OCI-LY7 (cell line): ENCODE measurements at regions of chr22 and their contacts with region 1.

Region 1: GRCh38 chr22:36017651-36018091 is 11.0 kb downstream of the RBFOX2 start:
- DNase-seq: peak; percentile 97
- H3K4me3 ChIP-seq: peak overlapping the region; percentile 56
- H3K27ac ChIP-seq: peak overlapping the region; percentile 98
- H3K4me1 ChIP-seq: peaks cover 83% of the 10 kb centered on the region
- CTCF ChIP-seq: no peak

Region 2: GRCh38 chr22:35930933-35931332 is 86.7 kb before region 1 on chr22:
- CTCF ChIA-PET with region 1: no interaction called
- POLR2A ChIA-PET with region 1: interaction called, 6 read pairs
- intact Hi-C with region 1: loop called (anchors 2 kb)
- DNase-seq: peak; percentile 80
- H3K4me3 ChIP-seq: no peak overlapping the region
- H3K27ac ChIP-seq: no peak overlapping the region
- H3K4me1 ChIP-seq: peaks cover 7% of the 10 kb centered on the region
- CTCF ChIP-seq: peak; percentile 93

Region 3: DNA sequence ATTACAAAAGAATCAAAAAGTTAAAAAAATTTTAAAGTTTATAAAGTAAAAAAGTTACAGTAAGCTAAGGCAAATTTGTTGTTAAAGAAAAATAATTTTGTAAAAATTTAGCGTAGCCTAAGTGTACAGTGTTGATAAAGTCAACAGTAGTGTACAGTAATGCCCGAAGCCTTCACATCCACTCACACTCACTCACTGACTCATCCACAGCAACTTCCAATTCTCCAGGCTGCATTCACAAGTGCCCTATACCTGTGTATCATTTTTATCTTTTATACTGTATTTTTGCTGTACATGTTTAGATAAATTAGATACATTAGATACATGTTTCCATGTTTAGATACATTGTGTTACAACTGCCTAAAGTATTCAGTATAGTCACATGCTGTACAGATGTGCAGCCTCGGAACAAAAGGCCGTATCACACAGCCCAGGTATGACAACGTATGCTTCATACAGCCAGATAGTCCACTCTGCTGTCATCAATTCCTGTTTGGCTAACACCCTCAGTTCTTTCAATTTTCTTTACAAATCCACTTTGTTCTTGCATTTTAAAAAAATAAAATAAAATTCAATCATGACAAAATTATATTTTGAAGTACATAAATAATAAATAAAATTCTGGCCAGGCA is 69.8 kb before region 1 on chr22:
- CTCF ChIA-PET with region 1: no interaction called
- POLR2A ChIA-PET with region 1: interaction called, 10 read pairs
- intact Hi-C with region 1: no loop called
- DNase-seq: no peak
- H3K4me3 ChIP-seq: no peak overlapping the region
- H3K27ac ChIP-seq: no peak overlapping the region
- H3K4me1 ChIP-seq: no peaks in the 10 kb centered on the region
- CTCF ChIP-seq: no peak

Region 4: GRCh38 chr22:36028646-36029405 is 11.2 kb after region 1 on chr22 and contains the start of gene RBFOX2:
- CTCF ChIA-PET with region 1: interaction called, 3 read pairs
- POLR2A ChIA-PET with region 1: interaction called, 14 read pairs
- intact Hi-C with region 1: no loop called
- DNase-seq: peak; percentile 77
- H3K4me3 ChIP-seq: peak within 1 kb of the TSS; percentile 96
- H3K27ac ChIP-seq: peak within 1 kb of the TSS; percentile 65
- H3K4me1 ChIP-seq: peaks cover 28% of the 10 kb centered on the region
- CTCF ChIP-seq: no peak
- total RNA-seq, gene RBFOX2: 74.3 and 78.7 TPM in 2 replicates

Region 5: GRCh38 chr22:36048911-36049677 is 31.4 kb after region 1 on chr22:
- CTCF ChIA-PET with region 1: no interaction called
- POLR2A ChIA-PET with region 1: no interaction called
- intact Hi-C with region 1: no loop called
- DNase-seq: no peak
- H3K4me3 ChIP-seq: no peak overlapping the region
- H3K27ac ChIP-seq: no peak overlapping the region
- H3K4me1 ChIP-seq: peaks cover 7% of the 10 kb centered on the region
- CTCF ChIP-seq: no peak

Region 6: DNA sequence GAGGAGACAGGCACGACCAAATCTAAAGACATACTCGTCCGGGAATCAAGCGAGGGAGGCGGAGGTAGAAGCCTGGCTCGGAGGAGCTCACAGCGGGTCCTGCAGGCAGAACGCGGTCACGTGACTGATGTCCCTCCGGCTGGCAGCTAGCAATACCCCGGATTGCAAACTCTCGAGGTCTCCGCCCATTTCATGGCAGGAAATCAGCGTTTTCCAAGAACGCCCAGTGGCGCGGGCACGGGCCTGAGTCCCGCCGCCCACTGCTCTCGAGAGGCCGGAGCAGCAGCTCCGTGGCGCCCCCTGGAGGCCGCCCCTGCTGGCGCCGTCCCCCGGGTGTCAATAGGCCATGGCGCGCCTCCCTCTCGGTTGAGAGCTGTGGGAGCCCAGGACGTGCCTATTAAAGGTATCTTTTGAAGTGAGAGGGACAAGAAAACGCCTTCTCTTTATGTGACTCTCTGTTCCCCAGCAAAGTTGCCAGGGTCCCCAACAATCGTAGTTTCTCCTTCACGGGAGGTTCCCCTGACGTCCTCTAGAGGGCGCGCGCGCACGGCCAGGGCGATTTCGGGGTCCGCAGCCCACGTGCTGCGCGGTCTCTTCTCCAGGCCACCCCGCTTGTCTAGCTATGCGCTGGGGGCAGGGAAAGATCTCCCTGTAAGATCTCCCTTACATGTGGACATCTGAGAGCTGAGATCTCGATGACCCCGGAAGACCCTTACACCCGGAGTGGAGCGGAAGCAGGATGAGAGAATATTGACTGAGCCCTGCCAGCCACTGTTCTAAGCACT is 48.3 kb after region 1 on chr22:
- CTCF ChIA-PET with region 1: interaction called, 11 read pairs
- POLR2A ChIA-PET with region 1: interaction called, 5 read pairs
- intact Hi-C with region 1: no loop called
- DNase-seq: peak; percentile 81
- H3K4me3 ChIP-seq: peak overlapping the region; percentile 65
- H3K27ac ChIP-seq: no peak overlapping the region
- H3K4me1 ChIP-seq: peaks cover 10% of the 10 kb centered on the region
- CTCF ChIP-seq: peak; percentile 100

Region 7: DNA sequence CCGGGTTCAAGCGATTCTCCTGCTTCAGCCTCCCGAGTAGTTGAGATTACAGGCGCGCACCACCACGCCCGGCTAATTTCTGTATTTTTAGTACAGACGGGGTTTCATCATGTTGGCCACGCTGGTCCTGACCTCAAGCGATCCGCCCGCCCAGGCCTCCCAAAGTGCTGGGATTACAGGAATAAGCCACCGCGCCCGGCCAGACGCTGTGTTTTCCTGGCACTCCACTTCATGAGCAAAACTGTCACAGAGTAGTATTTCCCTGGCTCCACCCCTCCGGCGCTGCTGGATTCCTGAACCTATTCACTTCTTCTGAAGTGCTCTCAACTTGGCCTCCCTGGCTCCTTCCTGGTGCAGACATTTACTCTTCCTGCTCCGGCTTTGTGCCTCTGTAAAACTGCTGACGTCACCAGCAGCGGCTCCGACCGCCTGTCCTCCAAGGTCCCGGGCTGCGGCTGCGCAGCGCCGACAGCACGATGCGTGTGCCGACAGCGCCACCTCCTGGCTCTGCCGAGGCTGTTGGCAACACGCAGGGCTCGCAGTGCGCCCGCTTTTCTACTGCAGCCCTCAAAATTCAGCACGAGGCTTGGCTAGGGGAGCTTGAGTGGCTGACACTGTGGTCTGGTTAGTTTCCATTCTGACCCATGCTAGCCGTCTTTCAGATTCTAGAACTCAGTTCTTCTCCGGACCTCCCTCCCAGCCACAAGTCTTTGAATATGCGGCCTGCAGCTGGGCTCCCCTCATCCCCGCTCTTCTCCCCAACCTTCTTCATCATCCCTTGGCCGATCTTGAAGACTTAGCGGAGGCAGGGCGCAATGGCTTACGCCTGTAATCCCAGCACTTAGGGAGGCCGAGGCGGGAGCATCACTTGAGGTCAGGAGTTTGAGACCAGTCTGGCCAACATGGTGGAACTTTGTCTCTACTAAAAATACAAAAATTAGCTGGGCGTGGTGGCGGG is 106.3 kb after region 1 on chr22:
- CTCF ChIA-PET with region 1: no interaction called
- POLR2A ChIA-PET with region 1: no interaction called
- intact Hi-C with region 1: loop called (anchors 5 kb)
- DNase-seq: peak; percentile 95
- H3K4me3 ChIP-seq: no peak overlapping the region
- H3K27ac ChIP-seq: no peak overlapping the region
- H3K4me1 ChIP-seq: peaks cover 3% of the 10 kb centered on the region
- CTCF ChIP-seq: peak; percentile 99

Region 8: GRCh38 chr22:36387752-36388518 is 370.3 kb after region 1 on chr22 and contains the start of gene MYH9:
- CTCF ChIA-PET with region 1: no interaction called
- POLR2A ChIA-PET with region 1: no interaction called
- intact Hi-C with region 1: loop called (anchors 5 kb)
- DNase-seq: peak; percentile 99
- H3K4me3 ChIP-seq: peak within 1 kb of the TSS; percentile 86
- H3K27ac ChIP-seq: peak within 1 kb of the TSS; percentile 93
- H3K4me1 ChIP-seq: peaks cover 45% of the 10 kb centered on the region
- CTCF ChIP-seq: no peak
- total RNA-seq, gene MYH9: 112 and 133 TPM in 2 replicates